Posterior vena cava (tissue), 2 donors: ENCODE measurements at regions of chr14 and their contacts with region 1.

Region 1: DNA sequence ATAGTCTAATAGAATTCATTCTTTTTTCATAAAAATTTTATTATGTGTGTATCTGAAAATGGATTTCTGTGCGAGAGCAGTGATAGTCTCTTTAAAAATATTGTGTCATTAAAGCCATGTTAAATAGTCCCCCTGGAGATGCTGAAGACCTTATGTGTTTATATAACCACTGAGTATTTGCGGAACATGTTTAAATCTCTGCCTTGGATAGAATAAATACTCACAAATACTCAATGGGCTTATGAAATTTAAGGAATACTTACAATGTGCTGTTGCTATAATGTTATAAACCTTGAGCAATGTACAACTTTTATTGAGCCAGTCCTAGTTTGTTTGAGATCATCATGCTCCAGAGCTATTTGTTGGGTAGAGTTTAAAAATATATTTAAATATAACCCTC is 226.0 kb downstream of the SNAPC1 start:
- DNase-seq: no peak

Region 2: GRCh38 chr14:62443796-62444195 is 455.6 kb after region 1 on chr14:
- intact Hi-C with region 1: loop called in 1 of 2 experiments (anchors 10 kb)
- DNase-seq: no peak